HepG2 (cell line): ENCODE measurements at regions of chr18 and their contacts with region 1.

Region 1: DNA sequence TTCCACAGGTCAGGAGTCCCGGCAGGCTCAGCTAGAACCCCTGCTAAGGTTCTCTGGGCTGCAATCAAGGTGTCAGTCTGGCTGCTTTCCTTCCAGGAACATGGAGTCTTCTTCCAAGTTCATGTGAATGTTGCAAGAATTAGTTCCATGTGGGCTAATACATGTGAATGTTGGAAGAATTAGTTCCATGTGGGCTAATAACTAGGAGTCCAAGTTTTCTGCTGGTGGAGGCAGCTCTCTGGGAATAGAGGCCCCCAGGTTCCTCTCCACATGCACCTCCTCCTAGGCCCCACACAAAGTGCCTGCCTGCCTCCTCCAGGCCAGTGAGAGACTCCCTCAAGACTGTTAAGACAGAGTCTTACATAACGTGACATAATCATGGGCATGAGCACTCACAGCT is 140.8 kb upstream of the SLC35G4 start:
- DNase-seq: no peak
- ATAC-seq: no peak
- H3K4me3 ChIP-seq: no peak overlapping the region
- H3K27ac ChIP-seq: no peak overlapping the region
- H3K4me1 ChIP-seq: peaks cover 6% of the 10 kb centered on the region
- H3K27me3 ChIP-seq: peaks cover 0 to 3% of the 10 kb centered on the region in 2 experiments; a peak in 2 of 5 replicates
- CTCF ChIP-seq: no peak
- EP300 ChIP-seq: no peak
- POLR2A ChIP-seq: no peak
- RAD21 ChIP-seq: no peak

Region 2: GRCh38 chr18:11518788-11519685 is 50.4 kb after region 1 on chr18:
- CTCF ChIA-PET with region 1: interaction called, 3 read pairs
- POLR2A ChIA-PET with region 1: no interaction called
- in situ Hi-C with region 1: loop called (anchors 10 kb)
- intact Hi-C with region 1: loop called (anchors 2 kb)
- DNase-seq: peak; percentile 64
- ATAC-seq: peak; percentile 99
- H3K4me3 ChIP-seq: peak overlapping the region in 1 of 3 experiments; percentile 51; a peak in 1 of 6 replicates
- H3K27ac ChIP-seq: no peak overlapping the region
- H3K4me1 ChIP-seq: peaks cover 15% of the 10 kb centered on the region
- H3K27me3 ChIP-seq: no peaks in the 10 kb centered on the region
- CTCF ChIP-seq: peak; percentile 87
- EP300 ChIP-seq: no peak
- POLR2A ChIP-seq: no peak
- RAD21 ChIP-seq: peak; percentile 79